ENCODE measurements at regions of chr11 and their contacts with region 1.

Region 1: DNA sequence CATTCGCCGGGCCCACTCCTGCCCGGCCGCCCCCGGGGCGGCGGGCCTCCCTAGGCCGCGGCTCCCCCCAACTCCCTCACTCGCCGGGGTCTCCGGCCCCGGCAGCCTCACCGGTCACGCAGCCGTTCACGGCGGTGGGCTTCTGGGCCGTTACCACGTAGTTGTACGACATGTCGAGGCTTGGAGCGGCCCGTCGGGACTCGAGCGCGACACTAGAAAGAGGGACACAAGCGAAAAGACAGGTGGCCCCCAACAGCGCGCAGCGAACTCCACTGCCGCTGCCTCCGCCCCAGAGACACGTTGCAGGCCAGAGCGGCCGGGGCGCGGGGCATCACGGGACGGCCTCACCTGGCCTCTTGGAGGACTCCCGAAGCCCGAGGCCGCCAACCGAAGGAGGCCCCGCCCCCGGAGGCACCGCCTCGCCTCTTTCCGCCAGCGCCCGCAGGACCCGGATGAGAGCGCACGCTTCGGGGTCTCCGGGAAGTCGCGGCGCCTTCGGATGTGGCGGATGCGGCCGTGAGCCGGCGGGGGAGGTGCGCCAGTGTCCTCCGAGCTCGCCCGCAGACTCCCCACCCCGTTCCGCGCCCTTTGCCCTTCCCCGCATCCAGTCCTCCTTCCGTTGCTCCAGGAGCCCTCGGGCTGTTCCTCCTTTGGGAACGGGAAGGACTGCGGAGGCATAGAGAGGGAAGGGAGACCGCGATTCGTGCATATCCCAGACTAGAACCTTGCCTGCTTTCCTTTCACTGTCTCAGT is at the starts of genes DDB1 and TKFC:
- DNase-seq: peak; percentile 89 to 99 (median 96)
- H3K4me3 ChIP-seq: peak within 1 kb of the TSS; percentile 60 to 100 (median 96)
- H3K27ac ChIP-seq: peak within 1 kb of the TSS; percentile 12 to 98 (median 90)
- H3K27me3 ChIP-seq: no peaks in the 10 kb centered on the region
- CTCF ChIP-seq: peak in 46 of 56 donors; percentile 7 to 65 (median 39)
- total RNA-seq, gene DDB1: 141 to 239 (median 198) TPM
- total RNA-seq, gene TKFC: 14.9 to 63.7 (median 32.2) TPM

Region 2: GRCh38 chr11:60913793-60914632 is 419.0 kb before region 1 on chr11 and contains the start of gene TMEM109:
- intact Hi-C with region 1: loop called in 1 of 2 experiments (anchors 10 kb)
- DNase-seq: peak; percentile 85 to 91 (median 90)
- H3K4me3 ChIP-seq: peak within 1 kb of the TSS; percentile 57 to 100 (median 92)
- H3K27ac ChIP-seq: peak within 1 kb of the TSS; percentile 80 to 100 (median 98)
- H3K27me3 ChIP-seq: no peaks in the 10 kb centered on the region
- CTCF ChIP-seq: peak in 34 of 56 donors; percentile 10 to 56 (median 24)
- total RNA-seq, gene TMEM109: 30.8 to 53.0 (median 40.0) TPM

Region 3: GRCh38 chr11:61061081-61061826 is 271.7 kb before region 1 on chr11:
- intact Hi-C with region 1: no loop called
- DNase-seq: no peak
- H3K4me3 ChIP-seq: no peak overlapping the region
- H3K27ac ChIP-seq: no peak overlapping the region
- H3K27me3 ChIP-seq: no peaks in the 10 kb centered on the region
- CTCF ChIP-seq: no peak

Region 4: GRCh38 chr11:61254403-61255025 is 78.5 kb before region 1 on chr11:
- intact Hi-C with region 1: no loop called
- DNase-seq: peak in 8 of 10 donors; percentile 16 to 69 (median 52)
- H3K4me3 ChIP-seq: no peak overlapping the region
- H3K27ac ChIP-seq: no peak overlapping the region
- H3K27me3 ChIP-seq: no peaks in the 10 kb centered on the region
- CTCF ChIP-seq: peak; percentile 48 to 87 (median 78)

Region 5: GRCh38 chr11:61315260-61315659 is 17.7 kb before region 1 on chr11:
- intact Hi-C with region 1: no loop called
- DNase-seq: no peak
- H3K4me3 ChIP-seq: no peak overlapping the region
- H3K27ac ChIP-seq: no peak overlapping the region
- H3K27me3 ChIP-seq: no peaks in the 10 kb centered on the region
- CTCF ChIP-seq: no peak

Region 6: GRCh38 chr11:61361686-61362541 is 28.9 kb after region 1 on chr11 and contains the starts of genes CYB561A3 and TMEM138:
- intact Hi-C with region 1: loop called (anchors 1 to 2 kb)
- DNase-seq: peak; percentile 87 to 96 (median 94)
- H3K4me3 ChIP-seq: peak within 1 kb of the TSS; percentile 52 to 98 (median 83)
- H3K27ac ChIP-seq: peak within 1 kb of the TSS; percentile 95 to 100 (median 100)
- H3K27me3 ChIP-seq: no peaks in the 10 kb centered on the region
- CTCF ChIP-seq: peak in 22 of 56 donors; percentile 7 to 54 (median 20)
- total RNA-seq, gene CYB561A3: 7.2 to 29.3 (median 19.0) TPM
- total RNA-seq, gene TMEM138: 18.4 to 51.8 (median 31.7) TPM

Region 7: DNA sequence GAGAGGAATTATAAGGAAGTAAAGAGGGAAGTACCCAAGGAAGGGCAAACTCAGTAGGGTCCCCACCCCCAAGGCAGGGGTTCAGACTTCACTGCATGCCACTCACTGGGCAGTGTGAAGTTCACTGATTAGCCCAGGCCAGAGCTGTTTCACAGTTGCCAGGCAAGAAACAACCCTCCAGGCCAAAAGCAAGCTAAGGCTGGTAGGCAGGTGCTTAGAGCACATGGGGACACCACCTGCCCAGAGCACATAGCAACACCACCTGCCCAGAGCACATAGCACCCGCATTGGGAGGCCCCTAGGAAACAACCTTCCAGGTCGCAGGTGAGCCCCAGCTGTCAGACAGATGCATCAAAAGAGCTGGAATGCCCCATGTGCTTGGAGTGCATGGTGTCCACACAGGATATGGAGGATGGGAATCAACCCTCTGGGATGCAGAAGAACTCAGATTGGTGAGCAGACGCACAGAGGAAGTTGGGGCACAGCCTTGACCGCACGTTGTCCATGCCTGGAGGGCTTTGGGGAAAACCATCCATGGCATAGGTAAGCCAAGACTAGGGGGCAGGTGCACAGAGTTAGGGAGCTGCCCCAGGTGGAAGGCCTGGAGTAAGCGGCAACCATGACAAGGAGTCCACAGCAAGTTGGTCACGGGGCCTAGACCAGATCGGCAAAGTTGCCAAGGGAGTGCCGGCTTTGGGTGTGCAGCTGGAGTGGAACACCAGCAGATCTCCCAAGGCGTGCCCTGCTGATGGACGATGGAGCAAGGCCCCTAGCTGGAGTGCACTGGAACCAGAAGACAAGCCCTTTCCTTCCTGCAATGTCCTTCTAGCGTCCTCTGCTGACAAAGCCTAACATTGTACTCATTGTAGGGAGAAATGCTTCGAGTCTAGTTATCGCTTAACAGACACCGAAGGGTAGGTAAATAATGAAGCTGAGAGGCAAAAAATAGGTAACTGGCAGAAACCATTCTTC is 51.6 kb after region 1 on chr11:
- intact Hi-C with region 1: loop called (anchors 5 kb)
- DNase-seq: no peak
- H3K4me3 ChIP-seq: no peak overlapping the region
- H3K27ac ChIP-seq: no peak overlapping the region
- H3K27me3 ChIP-seq: no peaks in the 10 kb centered on the region
- CTCF ChIP-seq: no peak

Region 8: DNA sequence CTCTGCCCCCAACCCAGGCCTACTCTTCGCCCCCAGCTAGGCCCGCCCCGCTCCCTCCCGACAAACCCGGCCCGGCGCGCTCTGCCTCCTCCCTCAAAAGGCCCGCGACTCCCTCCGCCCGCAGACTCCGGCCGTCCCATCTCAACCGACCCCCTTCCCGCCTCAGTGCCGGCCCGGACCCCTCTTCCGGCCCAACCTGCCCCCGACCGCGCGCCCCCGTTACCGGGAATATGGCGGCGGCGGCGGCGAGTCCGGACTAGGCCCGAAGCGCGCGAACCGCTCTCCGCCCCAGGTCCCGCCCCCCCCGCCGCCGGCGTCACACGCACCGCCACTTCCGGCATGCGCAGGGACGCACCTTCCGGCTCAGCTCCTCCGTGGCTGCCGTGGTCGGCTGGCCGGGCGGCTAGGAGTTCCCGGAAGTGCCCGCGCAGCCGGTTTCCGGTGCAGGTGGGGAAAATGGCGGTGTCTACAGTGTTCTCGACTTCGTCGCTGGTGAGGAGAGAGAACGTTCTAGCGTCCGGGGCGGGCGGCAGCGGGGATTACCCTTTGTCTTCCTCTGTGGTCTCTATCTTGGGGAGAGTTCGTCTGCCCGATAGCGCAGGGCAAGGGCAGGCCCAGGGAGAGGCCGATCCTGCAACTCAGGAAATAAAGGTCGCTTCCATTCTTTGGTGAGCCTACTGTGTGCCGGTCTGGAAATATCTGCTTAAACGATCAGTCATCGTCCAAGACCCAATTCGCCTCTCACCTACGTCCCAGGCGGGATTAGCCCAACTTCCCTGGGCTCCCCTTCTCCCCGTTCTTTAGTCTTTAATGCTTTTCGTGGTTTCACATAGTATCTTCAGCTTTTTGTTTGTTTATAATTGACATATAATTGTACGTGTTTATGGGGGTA is 97.0 kb after region 1 on chr11 and contains the starts of genes CPSF7 and SDHAF2:
- intact Hi-C with region 1: loop called (anchors 5 to 10 kb)
- DNase-seq: peak; percentile 91 to 99 (median 96)
- H3K4me3 ChIP-seq: peak within 1 kb of the TSS; percentile 73 to 100 (median 92)
- H3K27ac ChIP-seq: peak within 1 kb of the TSS; percentile 69 to 97 (median 92)
- H3K27me3 ChIP-seq: no peaks in the 10 kb centered on the region
- CTCF ChIP-seq: peak in 19 of 56 donors; percentile 2 to 52 (median 15)
- total RNA-seq, gene CPSF7: 73.7 to 125 (median 93.7) TPM
- total RNA-seq, gene SDHAF2: 23.9 to 53.9 (median 37.5) TPM

Measured in dorsolateral prefrontal cortex (tissue), 120 donors.